Activated T-helper 1 cell treated with anti-CD3 and anti-CD28 coated beads, Interleukin-12 subunit alpha, Interleukin-12 subunit beta, Interleukin-2, Interleukin-4 antibody, amounts not matched to agents 30 ng/mL and 10 ng/mL and 1 ng/mL, durations not matched to agents 14 hours and 24 hours and 36 hours (primary cell): ENCODE measurements at regions of chr2 and their contacts with region 1.

Region 1: DNA sequence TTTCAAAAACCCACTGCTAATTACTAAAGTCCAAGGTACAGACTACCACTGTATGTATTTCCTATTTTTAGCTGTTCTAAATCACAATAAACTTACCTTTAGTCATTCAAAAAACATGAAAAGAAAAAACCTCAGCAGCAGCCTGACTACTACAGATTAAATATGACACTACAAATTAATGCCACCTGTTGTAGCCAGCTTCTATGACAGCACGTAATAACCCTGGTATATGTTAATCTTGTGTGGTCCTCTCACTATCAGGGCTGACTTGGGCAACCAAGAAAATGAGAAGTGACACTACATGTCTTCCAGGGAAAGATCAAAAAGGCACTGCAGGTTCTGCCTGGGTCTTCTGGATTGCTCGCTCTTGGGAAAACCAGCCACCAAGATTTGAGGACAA is 90.6 kb upstream of the FAM124B start:
- DNase-seq: no peak
- H3K4me3 Mint-ChIP-seq: no peak overlapping the region
- H3K27ac Mint-ChIP-seq: no peak overlapping the region
- H3K4me1 Mint-ChIP-seq: peaks cover 17% of the 10 kb centered on the region
- H3K27me3 Mint-ChIP-seq: no peaks in the 10 kb centered on the region

Region 2: DNA sequence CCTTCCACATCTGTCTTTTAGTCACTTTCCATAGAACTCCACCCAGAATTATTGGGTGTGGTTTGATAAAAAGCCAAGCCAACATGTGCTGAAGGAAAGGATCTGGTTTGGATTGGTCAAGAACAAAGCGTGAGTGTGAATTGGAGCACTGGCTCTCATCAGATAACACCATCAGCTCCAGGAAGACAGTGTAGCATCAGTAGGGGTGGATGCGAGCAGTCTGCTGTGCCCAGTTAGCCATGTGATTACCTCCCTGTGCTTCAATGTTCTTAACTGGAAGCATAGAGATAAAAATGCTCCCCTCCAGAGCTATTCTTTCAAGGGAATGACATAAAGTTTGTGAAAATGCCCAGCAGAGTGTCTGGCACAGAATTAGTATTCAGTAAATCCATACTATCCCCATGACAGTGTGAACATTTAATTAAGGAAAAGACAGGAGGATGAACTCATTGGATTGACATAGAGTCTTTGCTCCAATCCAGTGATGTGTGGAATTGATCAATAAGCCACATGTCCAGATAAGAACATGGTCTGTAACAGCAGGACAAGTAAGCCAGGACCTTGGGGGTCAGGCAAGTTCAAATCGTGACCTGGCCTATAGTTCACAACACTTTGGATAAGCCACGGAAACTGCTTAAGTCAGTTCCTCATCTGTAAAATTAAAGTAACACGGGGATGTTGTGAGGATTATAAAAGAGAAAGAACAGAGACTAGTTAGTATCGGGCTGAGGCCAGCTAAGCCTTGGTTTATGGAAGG is 158.6 kb before region 1 on chr2:
- intact Hi-C with region 1: no loop called
- DNase-seq: no peak
- H3K4me3 Mint-ChIP-seq: no peak overlapping the region
- H3K27ac Mint-ChIP-seq: no peak overlapping the region
- H3K4me1 Mint-ChIP-seq: no peaks in the 10 kb centered on the region
- H3K27me3 Mint-ChIP-seq: peaks cover 13% of the 10 kb centered on the region

Region 3: GRCh38 chr2:224507789-224508188 is 15.3 kb after region 1 on chr2:
- intact Hi-C with region 1: no loop called
- DNase-seq: no peak
- H3K4me3 Mint-ChIP-seq: no peak overlapping the region
- H3K27ac Mint-ChIP-seq: no peak overlapping the region
- H3K4me1 Mint-ChIP-seq: peaks cover 10% of the 10 kb centered on the region
- H3K27me3 Mint-ChIP-seq: no peaks in the 10 kb centered on the region

Region 4: DNA sequence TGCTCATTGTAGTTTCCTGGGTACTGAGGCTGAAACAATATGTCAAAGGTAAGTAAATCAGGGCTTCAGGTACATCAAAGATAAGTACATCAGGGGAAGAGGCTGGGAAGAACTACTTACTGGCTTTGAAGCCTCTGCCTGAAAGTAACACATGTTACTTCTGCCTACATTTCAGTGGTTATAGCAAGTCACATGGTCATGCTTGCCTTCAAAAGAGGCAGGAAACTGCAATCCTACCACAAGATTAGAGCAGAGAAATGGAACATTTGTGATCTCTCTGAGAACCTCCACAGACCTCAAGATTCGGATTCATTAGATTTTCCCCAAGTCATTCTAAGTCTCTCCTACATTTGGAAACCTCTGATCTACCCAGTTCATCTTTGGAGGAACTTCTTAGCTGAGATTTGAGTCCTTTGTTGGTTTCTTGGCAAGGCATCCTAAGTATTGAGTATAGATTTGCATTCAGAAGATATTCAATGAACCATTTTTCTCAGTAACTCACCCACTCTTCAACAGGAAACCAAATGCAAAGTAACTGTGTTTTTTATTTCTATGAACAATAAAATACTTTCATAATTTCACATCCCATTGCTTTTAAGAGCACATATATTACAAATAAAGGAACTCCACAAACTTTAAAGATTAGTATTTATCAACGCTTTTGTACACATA is 272.2 kb after region 1 on chr2:
- intact Hi-C with region 1: loop called (anchors 10 kb)
- DNase-seq: peak; percentile 5
- H3K4me3 Mint-ChIP-seq: no peak overlapping the region
- H3K27ac Mint-ChIP-seq: peak overlapping the region; percentile 86
- H3K4me1 Mint-ChIP-seq: peaks cover 40% of the 10 kb centered on the region
- H3K27me3 Mint-ChIP-seq: no peaks in the 10 kb centered on the region